ENCODE measurements at regions of chr3 and their contacts with region 1.

Region 1: GRCh38 chr3:31768479-31769123 is 212.5 kb downstream of the OSBPL10 start:
- DNase-seq: peak; percentile 77
- ATAC-seq: peak; percentile 44
- H3K4me3 Mint-ChIP-seq: no peak overlapping the region
- H3K27ac Mint-ChIP-seq: no peak overlapping the region
- H3K4me1 Mint-ChIP-seq: peaks cover 50% of the 10 kb centered on the region
- H3K27me3 Mint-ChIP-seq: peaks cover 2% of the 10 kb centered on the region

Region 2: GRCh38 chr3:31077021-31077601 is 691.5 kb before region 1 on chr3:
- CTCF ChIA-PET with region 1: no interaction called
- POLR2A ChIA-PET with region 1: no interaction called
- intact Hi-C with region 1: loop called in 1 of 2 experiments (anchors 5 kb)
- DNase-seq: peak; percentile 68
- ATAC-seq: peak; percentile 98
- H3K4me3 Mint-ChIP-seq: no peak overlapping the region
- H3K27ac Mint-ChIP-seq: peak overlapping the region; percentile 52
- H3K4me1 Mint-ChIP-seq: peaks cover 26% of the 10 kb centered on the region
- H3K27me3 Mint-ChIP-seq: peaks cover 5% of the 10 kb centered on the region

Region 3: GRCh38 chr3:31610700-31611275 is 157.8 kb before region 1 on chr3:
- CTCF ChIA-PET with region 1: interaction called, 4 read pairs
- POLR2A ChIA-PET with region 1: no interaction called
- intact Hi-C with region 1: loop called in 1 of 2 experiments (anchors 1 kb)
- DNase-seq: no peak
- ATAC-seq: no peak
- H3K4me3 Mint-ChIP-seq: no peak overlapping the region
- H3K27ac Mint-ChIP-seq: no peak overlapping the region
- H3K4me1 Mint-ChIP-seq: peaks cover 64% of the 10 kb centered on the region
- H3K27me3 Mint-ChIP-seq: no peaks in the 10 kb centered on the region

Region 4: DNA sequence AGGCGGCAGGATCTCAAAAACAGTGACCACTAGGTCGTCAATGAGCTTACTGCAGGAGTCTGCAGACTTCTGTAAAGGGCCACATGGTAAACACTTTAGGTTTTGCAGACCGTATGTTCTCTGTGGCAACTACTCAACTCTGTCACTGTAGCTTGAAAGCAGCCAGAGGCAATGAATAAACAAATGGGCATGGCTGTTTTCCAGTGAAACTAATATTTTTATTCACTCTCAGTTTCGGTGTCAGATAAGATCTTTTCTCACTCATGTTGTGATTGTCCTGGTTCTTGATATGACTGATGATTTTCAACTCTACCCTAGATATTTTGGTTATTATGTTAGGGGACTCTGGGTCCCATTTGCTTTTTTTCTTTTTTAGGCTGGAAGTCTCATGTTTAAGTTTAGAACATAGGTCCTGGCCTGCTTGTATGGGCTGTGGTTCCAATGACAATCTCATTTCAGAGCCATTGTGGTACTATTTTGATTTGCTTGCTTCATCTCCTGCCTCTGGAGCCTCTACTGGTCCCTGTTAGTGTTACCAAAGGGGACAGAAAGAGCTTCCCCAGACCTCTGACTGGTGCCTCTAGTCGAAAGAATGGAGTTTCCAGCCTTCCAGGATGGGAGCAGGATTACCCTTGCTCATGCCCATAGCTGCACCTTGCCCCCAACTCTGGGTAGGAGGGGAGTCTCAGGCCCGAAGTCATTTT is 13.9 kb before region 1 on chr3:
- CTCF ChIA-PET with region 1: interaction called, 8 read pairs
- POLR2A ChIA-PET with region 1: no interaction called
- intact Hi-C with region 1: loop called (anchors 1 kb)
- DNase-seq: no peak
- ATAC-seq: peak; percentile 57
- H3K4me3 Mint-ChIP-seq: no peak overlapping the region
- H3K27ac Mint-ChIP-seq: peak overlapping the region; percentile 95
- H3K4me1 Mint-ChIP-seq: peaks cover 48% of the 10 kb centered on the region
- H3K27me3 Mint-ChIP-seq: peaks cover 2% of the 10 kb centered on the region

Region 5: DNA sequence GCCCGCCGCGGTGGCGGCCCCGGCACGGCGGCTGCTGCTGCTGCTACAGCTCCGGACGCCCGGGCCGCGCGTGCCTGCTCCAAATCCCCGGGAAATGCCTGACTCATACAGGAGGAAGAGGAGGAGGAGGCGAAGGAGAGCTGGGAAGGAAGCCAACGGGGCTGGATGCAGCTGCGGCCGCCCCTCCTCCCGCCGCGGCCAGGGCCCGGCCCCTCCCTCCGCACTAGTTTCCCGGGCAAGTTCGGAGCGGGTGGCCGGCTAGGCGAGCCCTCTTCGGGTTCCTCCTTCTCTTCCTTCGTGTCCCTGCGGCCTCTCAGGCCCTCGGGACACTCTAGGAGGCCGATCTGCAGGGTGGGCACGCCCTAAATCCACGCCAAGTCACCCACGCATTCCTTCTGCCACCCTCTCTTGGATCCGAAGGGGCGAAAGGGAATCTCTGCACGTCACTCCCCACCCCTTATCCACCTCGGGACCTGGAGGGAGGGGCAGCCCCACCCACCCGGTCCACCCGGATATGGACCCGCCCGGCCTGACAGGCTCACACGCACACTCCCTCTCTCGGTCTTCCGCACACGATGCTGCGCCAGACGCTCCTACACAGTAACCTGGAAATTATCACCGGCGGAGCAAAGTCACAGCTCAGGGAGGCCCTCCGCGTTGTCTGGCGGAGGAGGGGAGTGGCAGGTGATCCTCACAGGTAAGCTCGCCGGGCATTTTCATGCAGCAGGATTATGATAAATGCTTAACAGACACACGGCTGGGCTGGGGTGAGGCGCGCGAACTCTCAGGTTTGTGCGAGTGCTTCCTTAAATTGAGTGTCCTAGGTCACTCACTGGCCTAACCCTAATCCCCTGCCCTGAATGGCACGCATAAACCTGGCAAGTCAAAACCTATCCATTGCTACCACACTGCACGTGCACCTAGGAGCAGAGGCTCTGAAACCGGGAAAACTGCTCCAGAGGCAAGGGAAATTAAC is 212.9 kb after region 1 on chr3 and contains the starts of genes OSBPL10 and ZNF860:
- CTCF ChIA-PET with region 1: interaction called, 3 read pairs
- POLR2A ChIA-PET with region 1: no interaction called
- intact Hi-C with region 1: loop called (anchors 2 to 5 kb)
- DNase-seq: peak; percentile 58
- ATAC-seq: peak; percentile 44
- H3K4me3 Mint-ChIP-seq: peak within 1 kb of the TSS; percentile 74
- H3K27ac Mint-ChIP-seq: peak within 1 kb of the TSS; percentile 53
- H3K4me1 Mint-ChIP-seq: peaks cover 20% of the 10 kb centered on the region
- H3K27me3 Mint-ChIP-seq: peaks cover 39% of the 10 kb centered on the region
- total RNA-seq, gene OSBPL10: 11.2 to 11.8 TPM
- total RNA-seq, gene ZNF860: 0.11 to 0.30 TPM